Activated T-helper 2 cell treated with anti-CD3 and anti-CD28 coated beads, Interferon-gamma antibody, Interleukin-2, Interleukin-4, amounts not matched to agents 10 μg/mL and 5 μg/mL and 100 μg/mL, durations not matched to agents 14 hours and 24 hours and 36 hours (primary cell): ENCODE measurements at regions of chr18 and their contacts with region 1.

Region 1: DNA sequence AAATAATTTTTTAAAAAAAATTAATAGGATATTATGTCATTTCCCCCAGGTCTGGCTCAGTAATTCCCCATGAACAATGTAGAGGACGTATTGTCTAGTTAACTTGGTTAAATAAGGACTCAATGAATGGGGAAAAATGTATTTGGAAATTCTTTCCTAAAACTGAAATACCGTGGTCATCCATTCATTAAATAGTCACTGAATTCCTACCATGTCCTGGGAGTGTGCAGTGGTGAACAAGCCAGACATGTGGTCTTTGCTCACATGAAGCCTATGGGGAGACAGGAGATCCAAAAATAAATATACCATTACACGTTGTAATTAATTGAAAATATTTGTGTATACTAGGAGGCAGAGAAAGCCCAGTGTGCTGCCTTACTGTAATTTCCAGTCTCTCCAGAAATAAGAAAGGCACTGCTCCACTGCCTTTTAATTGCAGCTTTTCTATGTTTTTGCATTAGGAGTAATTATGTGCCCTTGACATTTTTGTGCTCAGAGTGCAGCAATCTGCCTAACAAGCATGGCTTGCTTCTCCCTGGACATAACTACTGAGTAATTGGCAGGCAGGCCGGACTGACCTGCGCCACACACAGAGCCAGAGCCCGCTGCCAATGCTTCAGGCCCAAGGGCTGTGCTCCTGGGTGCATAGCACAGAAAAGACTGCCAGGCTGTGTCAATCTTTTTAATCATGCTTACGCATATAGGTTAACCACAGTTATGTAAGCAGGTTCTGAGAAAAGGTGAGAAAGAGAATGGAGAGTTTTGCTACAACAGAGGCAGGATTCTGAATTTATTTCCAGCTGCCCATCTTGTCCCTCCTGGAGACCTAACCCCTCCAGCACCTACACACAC is 22.2 kb upstream of the TTC39C start:
- DNase-seq: peak; percentile 20
- H3K4me3 Mint-ChIP-seq: peak overlapping the region; percentile 15
- H3K27ac Mint-ChIP-seq: peak overlapping the region; percentile 28
- H3K4me1 Mint-ChIP-seq: peaks cover 42% of the 10 kb centered on the region
- H3K27me3 Mint-ChIP-seq: peaks cover 39% of the 10 kb centered on the region

Region 2: DNA sequence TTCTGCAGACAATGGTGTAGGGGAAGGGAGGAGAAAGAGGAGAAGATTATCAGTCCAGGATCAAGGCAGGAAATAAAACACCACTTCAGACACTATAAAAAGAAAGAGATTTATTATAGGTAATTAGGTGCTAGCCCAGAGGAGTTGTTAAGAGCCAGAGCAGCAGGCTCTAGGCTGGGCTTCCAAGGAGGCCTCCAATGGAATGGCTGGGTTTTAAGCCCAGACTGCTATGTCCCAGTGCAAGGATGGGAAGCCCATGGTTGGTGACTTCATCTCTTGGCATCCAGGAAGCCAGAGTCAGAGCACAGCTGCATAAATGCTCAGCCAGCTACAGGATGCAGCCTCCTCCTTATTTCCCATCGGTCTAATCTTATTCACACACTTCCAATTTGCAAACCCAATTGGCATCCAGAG is 207.5 kb before region 1 on chr18:
- intact Hi-C with region 1: no loop called
- DNase-seq: no peak
- H3K4me3 Mint-ChIP-seq: no peak overlapping the region
- H3K27ac Mint-ChIP-seq: no peak overlapping the region
- H3K4me1 Mint-ChIP-seq: no peaks in the 10 kb centered on the region
- H3K27me3 Mint-ChIP-seq: peaks cover 27% of the 10 kb centered on the region

Region 3: DNA sequence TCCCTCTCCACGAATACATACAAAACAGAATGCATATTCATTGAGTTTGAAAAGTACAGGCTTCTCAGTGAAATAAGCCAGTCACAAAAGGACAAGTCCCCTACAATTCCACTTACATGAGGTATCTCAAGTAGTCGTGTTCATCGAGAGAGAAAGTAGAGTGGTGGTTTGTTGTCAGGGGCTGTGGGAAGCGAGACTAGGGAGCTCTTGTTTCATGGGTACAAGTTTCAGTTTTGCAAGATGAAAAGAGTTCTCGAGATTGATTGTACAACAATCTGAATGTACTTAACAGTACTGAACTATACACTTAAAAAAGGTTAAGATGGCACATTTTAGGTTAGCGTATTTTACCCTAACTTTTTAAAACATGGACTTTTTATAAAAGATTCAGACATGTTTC is 49.2 kb before region 1 on chr18:
- intact Hi-C with region 1: loop called (anchors 1 kb)
- DNase-seq: peak; percentile 39
- H3K4me3 Mint-ChIP-seq: peak overlapping the region; percentile 47
- H3K27ac Mint-ChIP-seq: peak overlapping the region; percentile 1
- H3K4me1 Mint-ChIP-seq: peaks cover 40% of the 10 kb centered on the region
- H3K27me3 Mint-ChIP-seq: peaks cover 48% of the 10 kb centered on the region

Region 4: GRCh38 chr18:24027156-24027827 is 35.0 kb after region 1 on chr18:
- intact Hi-C with region 1: no loop called
- DNase-seq: no peak
- H3K4me3 Mint-ChIP-seq: no peak overlapping the region
- H3K27ac Mint-ChIP-seq: no peak overlapping the region
- H3K4me1 Mint-ChIP-seq: peaks cover 50% of the 10 kb centered on the region
- H3K27me3 Mint-ChIP-seq: no peaks in the 10 kb centered on the region

Region 5: DNA sequence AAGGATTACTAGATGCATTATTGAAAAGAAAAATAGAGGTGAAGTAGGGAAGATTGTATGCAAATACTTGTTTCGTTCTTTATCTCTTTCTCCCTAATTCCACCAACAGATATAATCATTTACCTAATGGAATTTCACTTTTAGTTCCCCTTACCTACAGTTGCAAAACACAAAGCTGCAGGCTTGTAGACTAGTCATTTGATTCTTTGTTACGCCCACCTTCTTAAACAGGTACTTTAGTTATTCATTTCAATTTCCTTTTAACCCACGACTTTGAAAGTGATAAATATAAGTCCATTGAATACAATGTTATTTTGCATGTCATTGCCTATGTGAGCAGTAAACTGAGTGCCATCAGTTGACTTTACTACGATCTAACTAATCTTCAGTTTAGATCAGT is 464.2 kb after region 1 on chr18:
- intact Hi-C with region 1: no loop called
- DNase-seq: no peak
- H3K4me3 Mint-ChIP-seq: no peak overlapping the region
- H3K27ac Mint-ChIP-seq: peak overlapping the region; percentile 12
- H3K4me1 Mint-ChIP-seq: peaks cover 27% of the 10 kb centered on the region
- H3K27me3 Mint-ChIP-seq: peaks cover 13% of the 10 kb centered on the region